Vagina (tissue), 2 donors: ENCODE measurements at regions of chr14 and their contacts with region 1.

Region 1: GRCh38 chr14:20855652-20856291 is 35.4 kb upstream of the RNASE3 start:
- DNase-seq: no peak
- H3K4me3 ChIP-seq: no peak overlapping the region
- H3K27ac ChIP-seq: no peak overlapping the region
- H3K4me1 ChIP-seq: no peaks in the 10 kb centered on the region
- H3K27me3 ChIP-seq: no peaks in the 10 kb centered on the region
- CTCF ChIP-seq: peak in 2 of 3 experiments; percentile 65 to 66
- POLR2A ChIP-seq: no peak

Region 2: DNA sequence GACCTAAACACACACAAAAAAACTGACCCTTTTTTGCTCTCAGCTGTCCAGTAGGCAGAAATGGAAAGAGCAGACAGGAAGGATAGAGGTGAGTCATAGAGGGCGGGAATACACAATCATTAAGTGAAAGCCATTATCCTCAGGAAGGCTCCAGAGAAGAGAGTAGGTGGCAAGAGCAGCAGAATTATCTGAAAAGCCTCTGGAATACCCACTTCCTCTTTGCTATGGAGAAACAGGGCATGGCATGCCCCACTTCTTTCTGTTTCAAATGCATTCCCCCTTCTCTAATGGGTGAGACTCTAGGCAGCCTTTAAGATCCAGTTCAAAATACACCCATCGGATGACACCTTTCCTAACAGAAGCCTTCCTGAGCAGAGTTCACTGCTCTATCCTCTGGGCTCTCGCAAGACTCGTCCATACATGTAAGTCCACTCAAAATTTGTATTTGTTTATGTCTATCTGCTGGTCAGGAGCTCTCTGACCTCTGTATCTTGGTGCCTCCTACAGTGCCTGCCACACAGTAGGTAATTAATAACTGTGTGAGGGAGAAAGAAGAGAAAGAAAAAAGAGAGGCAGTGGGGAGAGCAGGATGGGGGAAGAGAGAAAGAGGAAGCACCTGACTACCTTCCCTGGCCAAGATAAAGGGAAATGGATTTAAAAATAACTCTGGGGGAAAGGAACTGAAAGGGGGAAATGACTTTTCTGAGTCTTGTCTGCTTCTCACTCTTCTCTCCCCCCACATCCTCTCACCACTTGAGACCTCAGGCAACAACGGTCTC is 428.4 kb before region 1 on chr14:
- intact Hi-C with region 1: no loop called
- DNase-seq: no peak
- H3K4me3 ChIP-seq: no peak overlapping the region
- H3K27ac ChIP-seq: no peak overlapping the region
- H3K4me1 ChIP-seq: peaks cover 9% of the 10 kb centered on the region
- H3K27me3 ChIP-seq: no peaks in the 10 kb centered on the region
- CTCF ChIP-seq: no peak
- POLR2A ChIP-seq: no peak

Region 3: DNA sequence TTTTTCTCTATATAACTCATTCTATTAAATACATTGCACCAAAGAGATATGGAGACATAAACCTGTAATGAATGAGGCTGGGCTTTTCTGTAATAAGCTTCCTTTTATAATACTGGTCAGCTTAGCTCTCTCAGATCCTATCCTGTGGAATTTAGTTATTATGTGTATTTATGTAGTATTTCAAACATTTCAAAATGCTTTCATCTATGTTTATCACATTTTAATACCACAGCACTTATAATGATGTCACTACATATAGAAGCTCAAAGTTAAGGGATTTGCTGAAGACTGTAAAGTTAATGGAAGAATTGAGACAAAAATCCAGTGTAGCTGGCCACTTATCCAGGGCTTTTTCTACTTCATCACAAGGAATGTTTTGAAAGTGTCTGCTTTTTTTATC is 155.8 kb before region 1 on chr14:
- intact Hi-C with region 1: loop called (anchors 5 kb)
- DNase-seq: no peak
- H3K4me3 ChIP-seq: no peak overlapping the region
- H3K27ac ChIP-seq: no peak overlapping the region
- H3K4me1 ChIP-seq: peaks cover 7% of the 10 kb centered on the region
- H3K27me3 ChIP-seq: no peaks in the 10 kb centered on the region
- CTCF ChIP-seq: no peak
- POLR2A ChIP-seq: no peak

Region 4: DNA sequence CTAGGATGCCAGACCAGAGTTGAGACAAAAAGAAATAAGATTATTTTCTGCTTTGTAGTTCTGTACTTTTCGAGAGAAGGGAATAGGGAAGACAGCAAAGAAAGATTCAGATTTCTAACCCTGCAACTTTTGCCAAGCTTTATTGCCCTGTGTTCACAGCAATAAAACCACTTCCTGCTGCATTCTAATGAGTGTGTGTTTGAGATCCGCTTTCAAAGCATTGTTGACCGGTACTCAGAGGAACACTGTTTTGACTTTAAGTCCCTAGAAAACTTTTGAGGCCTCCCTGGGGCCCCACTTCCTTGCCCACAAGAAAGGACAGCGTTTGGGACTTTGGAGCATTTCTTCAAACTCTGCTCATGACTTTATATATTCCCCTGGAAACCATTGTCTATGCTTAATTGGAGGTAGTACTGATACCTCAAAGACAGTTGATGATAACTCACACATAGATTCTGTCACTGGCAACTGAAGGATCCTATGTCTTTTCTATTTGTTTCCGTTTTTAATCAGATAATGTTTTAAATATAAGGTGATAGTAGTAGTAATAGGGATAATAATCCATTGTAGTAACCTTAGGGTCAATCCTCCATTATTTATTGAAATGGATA is 73.4 kb before region 1 on chr14:
- intact Hi-C with region 1: no loop called
- DNase-seq: no peak
- H3K4me3 ChIP-seq: peak overlapping the region in 1 of 2 donors; percentile 0
- H3K27ac ChIP-seq: no peak overlapping the region
- H3K4me1 ChIP-seq: no peaks in the 10 kb centered on the region
- H3K27me3 ChIP-seq: no peaks in the 10 kb centered on the region
- CTCF ChIP-seq: no peak
- POLR2A ChIP-seq: no peak

Region 5: GRCh38 chr14:20877016-20877415 is 21.2 kb after region 1 on chr14:
- intact Hi-C with region 1: no loop called
- DNase-seq: no peak
- H3K4me3 ChIP-seq: no peak overlapping the region
- H3K27ac ChIP-seq: no peak overlapping the region
- H3K4me1 ChIP-seq: no peaks in the 10 kb centered on the region
- H3K27me3 ChIP-seq: no peaks in the 10 kb centered on the region
- CTCF ChIP-seq: no peak
- POLR2A ChIP-seq: no peak

Region 6: DNA sequence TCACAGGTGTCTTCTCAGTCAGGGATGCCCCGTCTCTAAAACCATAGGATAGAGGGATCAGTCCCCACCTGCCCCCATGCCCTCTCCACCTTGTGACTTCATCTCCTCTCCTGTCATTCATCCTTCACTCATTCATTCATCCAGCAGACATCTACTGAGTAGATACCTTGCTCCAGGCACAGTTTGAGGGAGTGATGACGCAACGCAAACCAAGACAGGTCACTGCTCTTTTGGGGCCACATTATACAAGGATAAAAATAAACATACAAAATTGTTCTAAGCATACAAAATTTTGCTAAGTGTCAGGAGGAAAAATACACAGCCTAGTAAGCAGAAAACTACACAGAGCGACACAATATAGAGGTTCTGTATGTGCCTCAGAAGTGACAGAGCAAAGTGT is 66.7 kb after region 1 on chr14:
- intact Hi-C with region 1: no loop called
- DNase-seq: no peak
- H3K4me3 ChIP-seq: no peak overlapping the region
- H3K27ac ChIP-seq: no peak overlapping the region
- H3K4me1 ChIP-seq: no peaks in the 10 kb centered on the region
- H3K27me3 ChIP-seq: no peaks in the 10 kb centered on the region
- CTCF ChIP-seq: no peak
- POLR2A ChIP-seq: no peak

Region 7: GRCh38 chr14:20970983-20971704 is 115.4 kb after region 1 on chr14:
- intact Hi-C with region 1: loop called (anchors 5 kb)
- DNase-seq: no peak
- H3K4me3 ChIP-seq: peak overlapping the region; percentile 63 to 67
- H3K27ac ChIP-seq: peak overlapping the region; percentile 91
- H3K4me1 ChIP-seq: peaks cover 4% of the 10 kb centered on the region
- H3K27me3 ChIP-seq: no peaks in the 10 kb centered on the region
- CTCF ChIP-seq: peak; percentile 80 to 93 (median 86)
- POLR2A ChIP-seq: no peak